AG04449 (cell line): ENCODE measurements at regions of chr17 and their contacts with region 1.

Region 1: DNA sequence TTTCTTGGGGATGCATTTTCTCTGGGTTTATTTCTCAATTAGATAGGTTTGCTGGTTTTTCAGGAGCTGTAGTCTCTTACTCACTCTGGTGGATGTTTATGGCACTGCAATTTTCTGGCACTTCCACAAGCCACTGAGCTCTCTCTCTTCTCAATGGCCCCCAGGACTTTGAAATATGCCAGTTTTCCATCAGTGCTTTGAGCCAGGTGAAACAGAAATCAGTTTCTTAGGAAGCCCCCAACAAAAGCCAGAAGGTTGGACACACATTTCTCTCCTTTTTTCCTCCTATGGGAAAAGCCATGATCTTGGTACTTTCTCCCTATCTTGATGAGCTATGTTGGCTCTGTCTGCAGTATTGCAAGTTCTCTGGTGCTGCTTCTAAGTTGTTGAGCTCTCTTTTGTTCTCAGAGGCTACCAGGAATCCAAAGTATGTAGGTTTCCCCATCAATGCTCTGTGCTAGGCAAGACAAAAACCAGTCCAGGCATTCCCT is 90.7 kb upstream of the SMIM36 start:
- DNase-seq: no peak
- H3K4me3 ChIP-seq: no peak overlapping the region
- CTCF ChIP-seq: peak; percentile 69

Region 2: DNA sequence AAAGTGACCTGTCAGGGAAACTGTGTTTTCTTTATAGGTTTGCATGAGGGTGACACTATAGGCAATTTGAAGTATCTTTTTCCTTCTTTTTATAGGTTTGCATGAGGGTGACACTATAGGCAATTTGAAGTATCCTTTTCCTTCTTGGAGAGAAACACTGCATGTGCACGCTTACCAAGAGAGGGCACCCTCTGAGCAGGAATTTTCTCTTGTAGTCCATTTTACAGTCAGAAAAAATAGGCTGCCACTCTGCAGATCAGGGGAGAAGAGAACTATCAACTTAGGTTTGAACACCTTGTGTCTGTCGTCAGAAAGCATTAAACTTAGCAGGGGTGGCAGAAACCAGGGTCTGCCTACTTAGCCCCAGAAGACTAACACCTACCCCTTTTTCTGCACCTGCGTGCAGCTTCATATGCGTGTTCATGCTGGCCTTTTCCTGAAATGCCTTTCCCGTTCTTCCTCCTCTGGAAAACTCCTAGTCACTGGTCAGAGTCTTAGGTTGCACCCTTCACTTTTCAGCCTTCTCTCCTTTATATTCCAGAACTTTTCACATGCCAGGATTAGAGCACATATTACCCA is 74.3 kb before region 1 on chr17:
- CTCF ChIA-PET with region 1: interaction called, 538 read pairs
- POLR2A ChIA-PET with region 1: no interaction called
- DNase-seq: no peak
- H3K4me3 ChIP-seq: no peak overlapping the region
- CTCF ChIP-seq: peak; percentile 65

Region 3: DNA sequence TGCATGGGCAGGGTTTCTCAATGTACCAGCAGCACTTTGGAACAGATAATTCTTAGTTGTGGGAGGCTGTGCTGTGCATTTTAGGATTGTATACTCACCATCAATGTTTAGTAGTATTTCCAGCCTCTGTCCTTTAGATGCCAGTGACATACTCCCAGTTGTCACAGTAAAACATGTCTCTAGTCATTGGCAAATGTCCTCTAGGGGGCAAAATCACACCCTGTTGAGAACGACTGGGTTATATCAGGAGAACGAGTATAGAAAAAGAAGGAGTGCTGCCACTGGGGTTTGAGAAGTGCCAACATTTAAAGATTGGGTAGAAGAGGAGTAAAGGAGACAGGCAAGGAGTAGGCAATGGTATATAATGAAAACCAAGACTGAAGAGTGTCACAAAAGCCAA is 52.8 kb before region 1 on chr17:
- CTCF ChIA-PET with region 1: interaction called, 13 read pairs
- POLR2A ChIA-PET with region 1: interaction called, 3 read pairs
- DNase-seq: no peak
- H3K4me3 ChIP-seq: no peak overlapping the region
- CTCF ChIP-seq: no peak

Region 4: DNA sequence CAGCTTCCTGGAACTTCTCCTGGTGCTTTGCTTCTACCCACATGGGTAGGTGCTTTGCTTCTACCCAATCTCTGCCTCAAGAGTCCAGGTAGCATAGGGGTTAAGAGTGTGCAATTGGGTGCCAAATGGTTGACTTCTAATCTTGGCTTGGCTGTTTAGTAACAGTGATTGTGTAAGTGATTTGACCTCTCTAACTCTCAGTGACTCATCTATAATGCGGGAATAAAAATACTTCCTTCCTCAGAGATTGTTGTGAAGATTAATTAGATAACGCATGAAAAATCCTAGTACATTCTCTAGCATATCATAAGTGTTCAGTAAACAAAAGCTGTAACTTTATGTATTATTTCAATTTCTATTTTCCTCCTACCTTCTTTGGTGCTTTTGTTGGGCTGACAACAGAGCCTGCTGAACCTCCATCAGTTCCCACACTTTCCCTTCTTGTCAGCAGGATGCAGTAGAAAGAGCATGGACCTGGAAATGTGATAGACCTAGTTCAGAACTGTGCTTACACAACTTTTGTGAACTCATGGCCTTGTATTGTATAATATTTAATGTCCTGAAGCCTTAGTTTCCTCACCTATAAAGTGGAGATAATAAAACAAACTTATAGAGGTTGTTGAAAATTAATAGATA is 17.8 kb before region 1 on chr17:
- CTCF ChIA-PET with region 1: interaction called, 55 read pairs
- POLR2A ChIA-PET with region 1: no interaction called
- DNase-seq: no peak
- H3K4me3 ChIP-seq: no peak overlapping the region
- CTCF ChIP-seq: no peak

Region 5: GRCh38 chr17:55635253-55635914 is 33.5 kb after region 1 on chr17:
- CTCF ChIA-PET with region 1: interaction called, 24 read pairs
- POLR2A ChIA-PET with region 1: no interaction called
- DNase-seq: no peak
- H3K4me3 ChIP-seq: no peak overlapping the region
- CTCF ChIP-seq: no peak

Region 6: GRCh38 chr17:55648086-55648485 is 46.2 kb after region 1 on chr17:
- CTCF ChIA-PET with region 1: interaction called, 10 read pairs
- POLR2A ChIA-PET with region 1: no interaction called
- DNase-seq: no peak
- H3K4me3 ChIP-seq: no peak overlapping the region
- CTCF ChIP-seq: no peak

Region 7: GRCh38 chr17:55770148-55770870 is 168.4 kb after region 1 on chr17:
- CTCF ChIA-PET with region 1: interaction called, 116 read pairs
- POLR2A ChIA-PET with region 1: no interaction called
- DNase-seq: peak; percentile 4
- H3K4me3 ChIP-seq: no peak overlapping the region
- CTCF ChIP-seq: peak; percentile 23

Region 8: GRCh38 chr17:55814377-55814776 is 212.5 kb after region 1 on chr17:
- CTCF ChIA-PET with region 1: no interaction called
- POLR2A ChIA-PET with region 1: no interaction called
- DNase-seq: no peak
- H3K4me3 ChIP-seq: no peak overlapping the region
- CTCF ChIP-seq: no peak